ENCODE measurements at regions of chr1 and their contacts with region 1.

Region 1: DNA sequence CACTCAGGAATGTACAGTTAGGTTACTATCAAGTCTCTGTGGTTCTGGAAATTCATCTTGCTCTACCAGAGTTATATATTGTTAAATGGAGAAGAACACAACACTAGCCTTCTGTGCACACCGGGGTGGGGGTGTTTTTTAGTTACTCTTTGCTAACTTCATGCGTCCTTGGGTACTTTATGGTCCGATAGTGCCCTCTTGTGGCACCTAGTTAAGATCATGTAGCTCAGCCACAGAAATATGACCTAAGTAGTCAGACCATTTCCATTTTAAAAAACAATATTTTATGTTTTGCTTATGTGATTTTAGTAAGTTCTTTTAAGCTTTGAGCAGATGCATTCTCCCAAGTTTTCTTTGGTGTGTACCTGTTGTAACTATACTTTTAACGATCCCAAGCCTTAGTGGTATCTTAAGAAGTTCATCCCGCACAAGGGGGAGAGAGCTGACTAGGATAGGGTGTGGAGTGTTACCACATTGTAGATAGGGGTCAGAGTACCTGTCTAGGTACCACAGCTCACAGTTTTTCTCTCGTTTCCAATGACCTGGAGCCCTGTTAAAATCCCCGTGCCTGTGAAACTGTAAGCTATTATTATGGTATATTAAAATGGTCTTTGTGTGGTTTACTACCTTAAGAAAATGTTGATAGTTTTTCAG is 20.6 kb upstream of the SH3D21 start:
- DNase-seq: peak; percentile 90 to 97 (median 93)
- H3K4me3 ChIP-seq: no peak overlapping the region
- H3K27ac ChIP-seq: no peak overlapping the region
- H3K4me1 ChIP-seq: peaks cover 0 to 2% (median 0%) of the 10 kb centered on the region in 4 experiments
- H3K27me3 ChIP-seq: no peaks in the 10 kb centered on the region

Region 2: GRCh38 chr1:36099681-36100341 is 185.8 kb before region 1 on chr1:
- CTCF ChIA-PET with region 1: interaction called, 29 read pairs
- POLR2A ChIA-PET with region 1: no interaction called
- DNase-seq: peak; percentile 63 to 76 (median 75)
- H3K4me3 ChIP-seq: peak overlapping the region in 3 of 7 experiments; percentile 19 to 66 (median 35)
- H3K27ac ChIP-seq: no peak overlapping the region
- H3K4me1 ChIP-seq: peaks cover 0 to 20% (median 13%) of the 10 kb centered on the region in 4 experiments
- H3K27me3 ChIP-seq: no peaks in the 10 kb centered on the region

Region 3: GRCh38 chr1:36300526-36300925 is 15.0 kb after region 1 on chr1:
- CTCF ChIA-PET with region 1: interaction called, 15 read pairs
- POLR2A ChIA-PET with region 1: interaction called, 3 read pairs
- DNase-seq: peak in 1 of 3 donors; percentile 33
- H3K4me3 ChIP-seq: no peak overlapping the region
- H3K27ac ChIP-seq: no peak overlapping the region
- H3K4me1 ChIP-seq: peaks cover 0 to 31% (median 18%) of the 10 kb centered on the region in 4 experiments
- H3K27me3 ChIP-seq: no peaks in the 10 kb centered on the region

Measured in common myeloid progenitor, CD34-positive (primary cell).